OCI-LY7 (cell line): ENCODE measurements at regions of chr11 and their contacts with region 1.

Region 1: DNA sequence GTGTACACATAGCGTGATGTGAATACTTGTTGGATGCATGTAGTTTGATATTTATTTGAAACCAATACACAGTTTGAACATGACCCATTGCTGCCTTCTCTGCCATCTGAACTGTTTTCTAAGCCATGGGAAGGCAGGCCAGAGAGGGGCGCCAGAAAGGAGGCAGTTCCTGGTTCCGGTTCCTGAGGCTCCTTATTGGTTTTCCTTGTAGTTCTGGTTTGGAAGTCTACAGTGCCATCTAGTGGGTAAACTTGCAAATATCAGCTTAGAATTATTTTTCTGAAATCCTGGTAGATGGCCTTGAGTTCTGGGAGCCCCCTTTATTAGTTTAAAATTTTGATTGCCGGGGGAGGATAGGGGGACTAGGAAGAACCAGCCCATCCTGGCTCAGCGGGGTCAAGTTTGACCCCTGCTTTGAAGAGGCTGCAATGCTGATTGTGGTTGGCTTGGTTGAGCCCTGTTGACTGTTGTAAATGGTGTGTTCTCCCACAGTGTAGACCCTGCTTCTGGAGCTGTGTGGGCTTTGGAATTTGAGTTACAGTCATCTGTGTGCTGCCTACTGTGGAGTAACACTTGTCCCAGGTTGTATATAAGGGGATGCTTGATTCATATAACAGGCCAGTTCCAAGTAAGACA is 48.4 kb downstream of the GRAMD1B start:
- DNase-seq: peak; percentile 67
- H3K4me3 ChIP-seq: no peak overlapping the region
- H3K27ac ChIP-seq: no peak overlapping the region
- H3K4me1 ChIP-seq: peaks cover 11% of the 10 kb centered on the region
- CTCF ChIP-seq: peak; percentile 94

Region 2: GRCh38 chr11:123033895-123034294 is 444.6 kb before region 1 on chr11:
- CTCF ChIA-PET with region 1: no interaction called
- POLR2A ChIA-PET with region 1: no interaction called
- intact Hi-C with region 1: no loop called
- DNase-seq: no peak
- H3K4me3 ChIP-seq: no peak overlapping the region
- H3K27ac ChIP-seq: no peak overlapping the region
- H3K4me1 ChIP-seq: no peaks in the 10 kb centered on the region
- CTCF ChIP-seq: no peak

Region 3: DNA sequence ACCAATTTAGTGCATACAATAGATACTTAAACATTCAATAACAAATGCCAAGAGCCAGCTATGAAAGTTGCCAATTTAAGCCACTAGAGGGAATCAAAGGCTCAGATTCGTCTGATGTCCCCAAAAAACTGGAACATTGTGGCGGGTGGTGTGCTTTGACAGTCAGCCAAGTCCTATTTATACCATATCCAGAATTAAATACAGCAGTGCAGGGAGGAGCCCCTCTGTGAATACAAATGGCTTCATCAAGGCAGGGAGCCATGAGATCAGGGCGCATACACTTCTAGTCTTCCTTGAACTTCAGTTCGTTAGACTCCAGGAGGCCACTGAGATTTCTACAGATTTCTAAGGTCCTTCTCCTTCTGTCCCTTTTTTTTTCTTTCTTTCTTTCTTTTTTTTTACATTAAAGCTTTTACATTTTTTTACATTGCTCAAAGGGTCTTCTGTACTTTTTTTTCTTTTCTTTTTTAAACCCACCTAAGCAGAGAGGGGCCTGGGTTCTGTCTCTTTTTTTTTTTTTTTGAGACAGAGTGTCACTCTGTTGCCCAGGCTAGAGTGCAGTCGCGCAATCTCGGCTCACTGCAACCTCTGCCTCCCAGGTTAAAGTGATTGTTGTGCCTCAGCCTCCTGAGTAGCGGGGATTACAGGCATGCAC is 375.0 kb before region 1 on chr11:
- CTCF ChIA-PET with region 1: no interaction called
- POLR2A ChIA-PET with region 1: no interaction called
- intact Hi-C with region 1: loop called (anchors 2 kb)
- DNase-seq: peak; percentile 51
- H3K4me3 ChIP-seq: no peak overlapping the region
- H3K27ac ChIP-seq: no peak overlapping the region
- H3K4me1 ChIP-seq: no peaks in the 10 kb centered on the region
- CTCF ChIP-seq: peak; percentile 80

Region 4: DNA sequence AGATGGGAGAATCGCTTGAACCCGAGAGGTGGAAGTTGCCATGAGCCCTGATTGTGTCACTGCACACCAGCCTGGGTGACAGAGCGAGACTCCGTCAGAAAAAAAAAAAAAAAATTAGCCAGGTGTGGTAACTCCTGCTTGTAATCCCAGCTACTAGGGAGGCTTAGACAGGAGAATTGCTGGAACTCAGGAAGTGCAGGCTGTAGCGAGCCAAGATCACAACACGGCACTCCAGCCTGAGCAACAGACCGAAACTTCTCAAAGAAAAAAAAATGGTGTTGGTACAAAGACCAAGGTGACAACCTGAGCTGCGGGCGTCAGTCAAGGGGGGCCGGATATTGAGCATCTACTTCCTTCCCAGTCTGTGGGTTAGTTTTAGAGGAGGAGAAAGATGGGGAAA is 368.1 kb before region 1 on chr11:
- CTCF ChIA-PET with region 1: interaction called, 4 read pairs
- POLR2A ChIA-PET with region 1: no interaction called
- intact Hi-C with region 1: loop called (anchors 1 kb)
- DNase-seq: no peak
- H3K4me3 ChIP-seq: no peak overlapping the region
- H3K27ac ChIP-seq: no peak overlapping the region
- H3K4me1 ChIP-seq: no peaks in the 10 kb centered on the region
- CTCF ChIP-seq: no peak

Region 5: DNA sequence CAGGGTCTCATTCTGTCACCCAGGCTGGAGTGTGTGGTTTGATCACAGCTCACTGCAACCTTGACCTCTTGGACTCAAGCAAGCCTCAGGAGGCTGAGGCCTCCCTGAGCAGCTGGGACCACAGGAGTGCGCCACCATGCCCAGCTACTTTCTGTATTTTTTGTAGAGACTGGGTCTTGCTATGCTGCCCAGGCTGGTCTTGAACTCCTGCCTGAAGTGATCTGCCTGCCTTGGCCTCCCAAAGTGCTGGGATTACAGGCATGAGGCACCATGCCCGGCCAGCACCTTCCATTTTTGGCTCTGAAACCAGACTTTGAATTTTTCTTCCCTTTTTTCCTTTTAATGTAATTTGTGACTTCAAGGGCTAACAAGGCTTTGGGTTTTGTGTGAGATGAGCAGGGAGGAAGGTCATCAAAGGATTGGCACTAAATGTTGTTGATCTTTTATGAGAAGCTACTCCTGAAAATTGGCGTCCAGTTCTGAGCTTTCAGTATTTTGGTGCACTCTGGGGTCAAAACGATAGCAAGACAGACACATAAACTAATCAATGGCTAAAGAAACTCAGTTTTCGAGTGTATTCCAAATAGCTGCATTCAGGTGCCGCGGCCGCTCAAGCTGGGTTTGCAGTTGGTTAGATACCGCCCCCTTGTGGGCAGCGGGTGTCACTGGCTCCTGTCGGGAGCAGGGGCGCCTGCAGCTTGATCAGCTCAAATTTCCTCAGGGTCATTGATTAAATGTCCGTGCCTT is 231.5 kb before region 1 on chr11:
- CTCF ChIA-PET with region 1: no interaction called
- POLR2A ChIA-PET with region 1: no interaction called
- intact Hi-C with region 1: loop called (anchors 5 kb)
- DNase-seq: peak; percentile 85
- H3K4me3 ChIP-seq: no peak overlapping the region
- H3K27ac ChIP-seq: no peak overlapping the region
- H3K4me1 ChIP-seq: peaks cover 27% of the 10 kb centered on the region
- CTCF ChIP-seq: peak; percentile 99

Region 6: GRCh38 chr11:123301696-123302400 is 176.6 kb before region 1 on chr11:
- CTCF ChIA-PET with region 1: no interaction called
- POLR2A ChIA-PET with region 1: no interaction called
- intact Hi-C with region 1: loop called (anchors 5 kb)
- DNase-seq: no peak
- H3K4me3 ChIP-seq: no peak overlapping the region
- H3K27ac ChIP-seq: peak overlapping the region; percentile 95
- H3K4me1 ChIP-seq: peaks cover 60% of the 10 kb centered on the region
- CTCF ChIP-seq: peak; percentile 71

Region 7: GRCh38 chr11:123392844-123393243 is 85.6 kb before region 1 on chr11:
- CTCF ChIA-PET with region 1: no interaction called
- POLR2A ChIA-PET with region 1: no interaction called
- intact Hi-C with region 1: no loop called
- DNase-seq: no peak
- H3K4me3 ChIP-seq: no peak overlapping the region
- H3K27ac ChIP-seq: no peak overlapping the region
- H3K4me1 ChIP-seq: no peaks in the 10 kb centered on the region
- CTCF ChIP-seq: no peak

Region 8: GRCh38 chr11:123407130-123407995 is 71.1 kb before region 1 on chr11:
- CTCF ChIA-PET with region 1: no interaction called
- POLR2A ChIA-PET with region 1: no interaction called
- intact Hi-C with region 1: loop called (anchors 2 kb)
- DNase-seq: peak; percentile 56
- H3K4me3 ChIP-seq: no peak overlapping the region
- H3K27ac ChIP-seq: no peak overlapping the region
- H3K4me1 ChIP-seq: peaks cover 25% of the 10 kb centered on the region
- CTCF ChIP-seq: peak; percentile 82

Region 9: GRCh38 chr11:124177352-124177751 is 698.9 kb after region 1 on chr11:
- CTCF ChIA-PET with region 1: no interaction called
- POLR2A ChIA-PET with region 1: no interaction called
- intact Hi-C with region 1: no loop called
- DNase-seq: no peak
- H3K4me3 ChIP-seq: no peak overlapping the region
- H3K27ac ChIP-seq: no peak overlapping the region
- H3K4me1 ChIP-seq: no peaks in the 10 kb centered on the region
- CTCF ChIP-seq: no peak